Pancreas (tissue), 10 donors: ENCODE measurements at regions of chr2 and their contacts with region 1.

Region 1: DNA sequence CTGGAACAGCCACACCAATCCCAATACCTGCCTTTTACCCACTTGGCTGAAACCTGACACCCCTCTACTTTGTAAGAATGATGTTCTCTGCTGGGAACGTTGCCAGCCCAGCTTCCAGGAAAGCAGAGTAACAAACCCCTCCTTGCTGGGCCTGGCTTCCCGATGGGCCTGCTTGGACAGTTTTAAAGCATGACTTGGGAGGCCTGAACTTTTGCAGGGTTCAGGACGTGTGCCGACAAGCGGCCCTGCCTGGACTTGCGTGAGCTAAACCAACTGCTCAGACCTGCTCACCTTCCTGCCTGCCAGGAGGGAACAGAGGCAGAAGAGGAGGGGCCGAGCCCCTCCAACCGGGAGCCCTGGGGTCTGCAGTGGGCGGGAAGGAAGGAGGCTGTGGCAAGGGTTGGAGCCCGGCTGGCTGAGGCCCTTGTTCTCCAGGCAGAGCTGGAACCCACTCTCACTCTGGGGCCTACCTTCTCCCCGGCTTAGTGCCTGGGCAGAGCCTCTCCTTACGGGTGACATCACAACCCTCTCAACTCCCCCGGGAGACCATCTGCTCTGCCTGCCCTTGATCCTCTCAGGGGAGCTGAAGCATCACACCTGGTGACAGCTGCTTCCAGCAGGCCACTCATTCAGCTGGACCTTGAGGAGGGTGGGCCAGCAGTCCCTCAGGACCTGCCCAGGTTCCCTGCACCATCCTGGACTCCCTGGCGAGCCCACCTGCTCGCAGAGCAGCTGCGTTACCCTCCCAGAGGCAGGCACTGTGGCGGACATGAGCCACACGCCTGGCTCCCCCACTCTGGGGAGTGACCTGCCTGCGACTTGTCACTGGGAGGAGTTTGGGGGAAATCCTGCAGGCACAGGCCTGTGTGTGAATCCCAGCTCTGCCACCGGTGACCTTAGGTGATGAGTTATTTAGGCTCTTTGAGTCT is 13.2 kb downstream of the HS6ST1 start:
- DNase-seq: peak; percentile 67 to 89 (median 80)
- ATAC-seq: peak; percentile 39 to 61 (median 52)
- H3K4me3 ChIP-seq: no peak overlapping the region
- H3K27ac ChIP-seq: peak overlapping the region; percentile 34 to 76 (median 64)
- H3K4me1 ChIP-seq: peaks cover 32 to 46% (median 39%) of the 10 kb centered on the region in 3 donors
- H3K27me3 ChIP-seq: no peaks in the 10 kb centered on the region
- CTCF ChIP-seq: no peak

Region 2: DNA sequence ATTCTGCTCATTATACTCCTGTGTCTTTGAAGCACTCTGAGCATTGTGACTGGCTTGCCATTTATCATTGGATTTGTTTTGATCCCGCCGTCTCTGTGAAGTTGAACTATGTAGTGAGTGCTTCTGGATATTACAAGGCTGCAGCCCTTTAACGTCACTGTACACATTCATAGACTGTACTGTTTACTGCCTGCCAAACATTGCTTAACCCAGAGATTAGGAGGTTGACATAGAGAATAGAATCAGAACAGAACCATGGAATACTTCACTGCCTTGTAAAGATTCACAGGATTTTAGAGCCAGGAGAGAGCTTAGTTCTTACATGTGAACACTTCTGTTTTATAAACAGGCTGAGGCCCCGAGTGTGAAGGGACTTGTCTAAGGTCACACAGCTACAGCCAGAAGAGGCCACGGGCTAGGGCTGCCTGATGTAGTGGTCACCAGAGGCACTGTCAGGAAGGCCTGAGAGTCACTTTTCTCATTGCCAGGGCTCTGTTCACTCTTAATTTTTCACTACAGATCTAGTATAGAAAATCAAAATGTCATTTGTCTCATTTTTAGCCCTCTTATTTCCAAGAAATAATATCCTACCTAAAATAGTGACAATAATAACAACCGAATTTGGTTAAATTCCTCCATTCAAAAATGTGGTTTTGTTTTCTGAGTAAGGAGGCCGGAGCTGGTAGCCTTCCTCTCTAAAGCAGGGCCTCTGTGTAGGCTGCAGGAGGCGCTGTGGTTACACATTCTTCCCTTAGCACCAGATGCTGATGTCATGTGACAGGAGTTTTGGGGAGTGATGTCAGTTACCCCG is 126.6 kb before region 1 on chr2:
- intact Hi-C with region 1: loop called in 1 of 3 experiments (anchors 10 kb)
- DNase-seq: peak in 3 of 6 donors; percentile 16 to 36 (median 35)
- ATAC-seq: peak; percentile 66 to 91 (median 86)
- H3K4me3 ChIP-seq: no peak overlapping the region
- H3K27ac ChIP-seq: no peak overlapping the region
- H3K4me1 ChIP-seq: no peaks in the 10 kb centered on the region
- H3K27me3 ChIP-seq: no peaks in the 10 kb centered on the region
- CTCF ChIP-seq: peak; percentile 14 to 48 (median 30)

Region 3: DNA sequence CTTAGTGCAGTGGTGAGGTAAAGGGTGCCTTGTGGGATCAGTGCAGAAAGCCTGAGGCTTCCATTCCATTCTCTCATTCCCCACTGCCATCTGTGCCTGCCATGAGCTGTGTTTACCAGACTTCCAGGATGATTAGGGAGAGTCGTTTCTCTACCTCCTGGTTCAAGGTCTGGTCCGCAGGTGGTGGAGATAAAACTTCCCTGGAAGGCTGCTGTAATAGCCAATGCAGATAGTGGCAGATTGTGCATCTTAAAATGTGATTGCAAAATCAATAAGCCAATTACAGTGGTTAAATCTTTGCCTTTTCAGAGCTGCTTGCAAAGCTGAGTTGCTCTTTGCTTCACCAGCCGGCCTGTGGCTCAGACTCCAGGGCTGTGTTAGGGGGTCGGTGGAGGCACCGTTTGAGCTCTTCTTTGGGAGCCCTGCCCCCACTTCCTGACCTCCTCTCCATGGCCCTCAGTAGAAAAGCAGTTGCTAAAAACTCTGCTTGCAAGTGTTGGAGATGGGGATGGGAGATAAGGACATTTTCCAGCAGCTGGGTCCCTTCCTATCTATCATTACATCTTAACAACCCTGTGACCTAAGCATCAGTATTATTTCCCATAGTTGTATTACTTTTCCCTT is 108.4 kb after region 1 on chr2:
- intact Hi-C with region 1: no loop called
- DNase-seq: peak in 3 of 6 donors; percentile 6 to 23 (median 17)
- ATAC-seq: peak; percentile 17 to 71 (median 40)
- H3K4me3 ChIP-seq: no peak overlapping the region
- H3K27ac ChIP-seq: no peak overlapping the region
- H3K4me1 ChIP-seq: peaks cover 0 to 11% (median 5%) of the 10 kb centered on the region in 3 donors
- H3K27me3 ChIP-seq: no peaks in the 10 kb centered on the region
- CTCF ChIP-seq: no peak